Tibial artery (tissue), 4 donors: ENCODE measurements at regions of chr11 and their contacts with region 1.

Region 1: DNA sequence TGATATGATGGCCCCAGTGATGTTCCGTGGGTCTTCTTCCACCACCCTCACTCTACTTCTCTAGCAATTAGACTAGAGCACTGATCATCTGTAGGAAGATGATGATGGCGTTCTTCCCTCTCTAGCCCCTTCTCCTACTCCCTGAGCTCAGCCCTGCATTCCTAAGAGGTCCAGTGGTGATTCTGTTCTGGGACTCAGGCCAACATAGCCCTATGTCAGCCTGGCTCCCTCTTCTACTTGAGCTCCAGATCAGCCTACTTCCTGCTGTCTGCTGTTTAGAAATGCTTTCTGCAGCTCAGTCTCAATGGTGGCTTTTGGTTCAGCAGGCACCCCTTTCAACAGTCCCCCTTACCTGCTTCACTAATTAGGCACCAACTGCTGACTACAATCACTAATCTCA is 86.1 kb upstream of the ZBED5 start:
- DNase-seq: no peak
- H3K4me3 ChIP-seq: no peak overlapping the region
- H3K27ac ChIP-seq: no peak overlapping the region
- H3K4me1 ChIP-seq: peaks cover 0 to 10% (median 4%) of the 10 kb centered on the region in 4 donors
- H3K27me3 ChIP-seq: no peaks in the 10 kb centered on the region
- CTCF ChIP-seq: no peak

Region 2: GRCh38 chr11:10998674-10999073 is 54.7 kb after region 1 on chr11:
- intact Hi-C with region 1: loop called (anchors 5 kb)
- DNase-seq: no peak
- H3K4me3 ChIP-seq: no peak overlapping the region
- H3K27ac ChIP-seq: no peak overlapping the region
- H3K4me1 ChIP-seq: no peaks in the 10 kb centered on the region
- H3K27me3 ChIP-seq: peaks cover 0 to 19% of the 10 kb centered on the region in 2 donors
- CTCF ChIP-seq: no peak

Region 3: DNA sequence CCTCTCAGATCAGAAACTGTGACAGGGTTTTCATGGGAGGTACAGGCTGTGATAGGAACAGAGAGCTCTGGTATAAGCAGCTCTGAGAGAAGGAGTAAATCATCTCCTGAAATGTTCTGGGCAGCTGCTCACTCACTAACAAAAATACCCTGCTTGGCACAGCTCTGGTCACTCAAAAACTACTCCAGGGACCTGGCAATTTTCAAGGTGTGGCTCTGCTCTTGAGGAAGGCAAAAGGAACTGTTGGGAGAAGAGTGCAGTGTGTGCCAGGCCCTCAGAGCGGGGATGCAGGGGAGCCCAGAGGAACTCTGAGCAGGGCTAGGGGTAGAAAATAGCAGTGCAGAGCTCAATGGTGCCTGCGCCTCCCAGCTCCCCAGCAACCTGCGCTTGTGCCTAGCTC is 94.4 kb after region 1 on chr11:
- intact Hi-C with region 1: no loop called
- DNase-seq: peak in 1 of 2 donors; percentile 72
- H3K4me3 ChIP-seq: no peak overlapping the region
- H3K27ac ChIP-seq: peak overlapping the region; percentile 70 to 76
- H3K4me1 ChIP-seq: peaks cover 0 to 29% (median 12%) of the 10 kb centered on the region in 4 donors
- H3K27me3 ChIP-seq: no peaks in the 10 kb centered on the region
- CTCF ChIP-seq: no peak